Right cardiac atrium (tissue), 5 donors: ENCODE measurements at regions of chr19 and their contacts with region 1.

Region 1: DNA sequence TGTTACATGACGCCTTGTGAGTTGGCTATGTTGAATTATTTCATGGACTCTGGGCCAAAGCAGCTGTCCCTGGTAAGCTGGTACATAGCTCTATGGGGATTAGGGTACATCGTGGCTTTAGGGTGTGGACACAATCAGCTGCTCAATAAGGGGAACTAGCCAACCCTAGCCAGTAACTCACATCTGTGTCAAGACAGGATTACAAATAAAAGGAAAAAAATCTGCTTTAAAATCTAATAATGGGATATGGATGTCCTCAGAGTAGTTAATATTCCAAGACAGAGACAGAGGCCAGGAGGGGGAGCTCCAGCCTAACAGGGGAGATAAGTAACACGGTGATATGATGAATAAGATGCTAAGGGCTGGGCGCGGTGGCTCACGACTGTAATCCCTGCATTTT is 21.1 kb upstream of the ZNF766 start:
- DNase-seq: peak; percentile 51 to 78 (median 63)
- ATAC-seq: peak; percentile 69 to 74
- H3K4me3 ChIP-seq: no peak overlapping the region
- H3K27ac ChIP-seq: no peak overlapping the region
- H3K4me1 ChIP-seq: no peaks in the 10 kb centered on the region
- H3K27me3 ChIP-seq: no peaks in the 10 kb centered on the region

Region 2: GRCh38 chr19:52570000-52570861 is 322.0 kb after region 1 on chr19 and contains the start of gene ZNF701:
- intact Hi-C with region 1: no loop called
- DNase-seq: peak; percentile 95 to 98 (median 98)
- ATAC-seq: peak; percentile 100
- H3K4me3 ChIP-seq: peak within 1 kb of the TSS; percentile 53
- H3K27ac ChIP-seq: peak within 1 kb of the TSS; percentile 52
- H3K4me1 ChIP-seq: no peaks in the 10 kb centered on the region
- H3K27me3 ChIP-seq: no peaks in the 10 kb centered on the region
- total RNA-seq, gene ZNF701: 16.2 to 19.7 (median 19.1) TPM

Region 3: DNA sequence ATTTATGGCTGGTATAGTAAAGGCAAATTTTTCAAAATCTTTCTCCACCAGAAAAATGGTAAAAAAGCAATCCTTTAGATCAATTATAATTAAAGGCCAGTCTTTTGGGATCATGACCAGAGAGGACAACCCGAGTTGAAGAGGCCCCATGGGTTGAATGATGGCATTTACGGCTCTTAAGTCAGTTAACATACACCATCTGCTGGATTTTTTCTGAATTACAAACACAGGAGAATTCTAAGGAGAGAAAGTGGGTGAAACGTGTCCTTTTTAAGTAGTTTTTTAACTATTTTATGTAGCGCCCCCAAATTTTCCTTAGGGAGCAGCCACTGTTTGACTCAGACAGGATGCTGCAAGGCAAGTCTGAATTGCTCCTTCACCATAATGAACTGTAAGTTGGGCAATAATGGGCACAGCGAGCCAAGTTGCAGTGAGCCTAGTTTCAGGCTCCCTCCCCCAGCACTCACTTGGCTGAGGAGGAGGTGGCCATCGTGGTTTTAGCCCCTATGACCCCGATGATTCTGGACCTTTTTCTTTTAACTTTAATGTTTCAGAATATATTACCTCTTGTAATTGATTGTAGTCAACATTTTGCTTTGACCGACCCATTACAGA is 500.2 kb after region 1 on chr19:
- intact Hi-C with region 1: loop called in 1 of 4 experiments (anchors 5 kb)
- DNase-seq: peak in 1 of 3 donors; percentile 43
- ATAC-seq: peak; percentile 43 to 72
- H3K4me3 ChIP-seq: no peak overlapping the region
- H3K27ac ChIP-seq: no peak overlapping the region
- H3K4me1 ChIP-seq: no peaks in the 10 kb centered on the region
- H3K27me3 ChIP-seq: no peaks in the 10 kb centered on the region